PC-9 (cell line): ENCODE measurements at regions of chr14 and their contacts with region 1.

Region 1: DNA sequence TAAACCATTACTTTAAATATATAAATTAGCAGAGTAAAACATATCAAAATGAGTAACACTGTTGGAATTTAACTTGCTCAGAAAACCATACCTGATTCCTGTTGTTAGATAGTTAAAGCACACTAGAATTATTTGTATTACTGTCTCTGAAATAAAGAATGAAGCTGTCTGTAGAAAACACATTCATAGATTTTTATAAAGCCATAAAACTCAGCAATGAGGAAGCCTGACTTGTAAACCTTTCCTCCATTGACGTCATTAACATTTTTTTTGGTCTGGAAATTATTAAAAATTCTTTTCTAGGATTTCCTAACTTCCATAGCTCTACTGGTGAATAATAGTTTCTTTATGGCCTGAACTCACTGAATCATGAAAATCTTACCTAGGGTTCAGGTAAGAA is 147.6 kb downstream of the BRMS1L start:
- DNase-seq: no peak
- H3K4me3 ChIP-seq: no peak overlapping the region
- H3K27ac ChIP-seq: no peak overlapping the region
- H3K4me1 ChIP-seq: no peaks in the 10 kb centered on the region
- H3K27me3 ChIP-seq: no peaks in the 10 kb centered on the region
- CTCF ChIP-seq: no peak

Region 2: DNA sequence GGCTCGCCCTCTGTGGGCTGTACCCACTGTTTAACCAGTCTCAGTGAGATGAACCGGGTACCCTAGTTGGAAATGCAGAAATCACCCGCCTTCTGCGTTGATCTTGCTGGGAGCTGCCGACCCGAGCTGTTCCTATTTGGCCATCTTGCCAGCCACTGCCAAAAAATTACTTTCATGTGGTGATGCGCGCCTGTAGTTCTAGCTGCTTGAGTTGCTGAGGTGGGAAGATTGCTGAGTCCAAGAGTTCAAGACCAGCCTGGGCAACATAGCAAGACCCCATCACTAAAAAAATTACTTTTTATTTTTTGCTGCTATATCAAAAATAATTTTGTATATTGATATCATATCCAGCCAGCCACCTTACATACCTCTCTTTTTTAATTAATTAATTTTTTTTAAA is 129.3 kb before region 1 on chr14:
- CTCF ChIA-PET with region 1: no interaction called
- POLR2A ChIA-PET with region 1: interaction called, 19 read pairs
- intact Hi-C with region 1: no loop called
- DNase-seq: no peak
- H3K4me3 ChIP-seq: no peak overlapping the region
- H3K27ac ChIP-seq: no peak overlapping the region
- H3K4me1 ChIP-seq: no peaks in the 10 kb centered on the region
- H3K27me3 ChIP-seq: no peaks in the 10 kb centered on the region
- CTCF ChIP-seq: no peak

Region 3: GRCh38 chr14:35909665-35910064 is 64.1 kb before region 1 on chr14:
- CTCF ChIA-PET with region 1: no interaction called
- POLR2A ChIA-PET with region 1: no interaction called
- intact Hi-C with region 1: no loop called
- DNase-seq: no peak
- H3K4me3 ChIP-seq: no peak overlapping the region
- H3K27ac ChIP-seq: no peak overlapping the region
- H3K4me1 ChIP-seq: no peaks in the 10 kb centered on the region
- H3K27me3 ChIP-seq: no peaks in the 10 kb centered on the region
- CTCF ChIP-seq: no peak